ENCODE measurements at regions of chrX and their contacts with region 1.

Region 1: DNA sequence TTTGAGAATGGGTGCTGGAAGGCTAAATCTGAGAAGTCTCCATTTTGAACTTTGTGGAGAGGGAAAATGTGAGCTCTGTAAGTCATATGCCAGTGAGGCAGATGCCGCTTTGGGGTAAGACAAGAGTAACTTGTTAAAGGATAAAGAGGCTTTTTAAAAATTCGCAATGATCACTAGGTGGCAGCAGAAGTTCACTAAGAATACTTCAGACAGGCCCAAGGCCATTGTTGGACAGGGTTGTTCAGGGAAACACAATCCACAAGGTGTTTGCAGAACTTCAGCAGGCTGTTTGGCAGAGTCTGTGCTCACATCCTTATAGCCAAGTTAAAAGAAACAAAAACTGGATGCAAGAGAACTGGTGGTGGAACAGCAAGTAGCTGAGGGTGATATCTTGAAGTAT is 13.7 kb upstream of the PIGA start:
- DNase-seq: peak; percentile 43 to 67 (median 55)
- H3K4me3 ChIP-seq: no peak overlapping the region
- H3K4me3 Mint-ChIP-seq: no peak overlapping the region
- H3K27ac ChIP-seq: no peak overlapping the region
- H3K27ac Mint-ChIP-seq: no peak overlapping the region
- H3K4me1 ChIP-seq: peaks cover 6 to 8% of the 10 kb centered on the region in 2 donors
- H3K4me1 Mint-ChIP-seq: peaks cover 13% of the 10 kb centered on the region
- H3K27me3 ChIP-seq: peaks cover 0 to 14% of the 10 kb centered on the region in 2 donors
- H3K27me3 Mint-ChIP-seq: peaks cover 0 to 22% (median 8%) of the 10 kb centered on the region in 3 donors
- CTCF ChIP-seq: peak; percentile 52

Region 2: DNA sequence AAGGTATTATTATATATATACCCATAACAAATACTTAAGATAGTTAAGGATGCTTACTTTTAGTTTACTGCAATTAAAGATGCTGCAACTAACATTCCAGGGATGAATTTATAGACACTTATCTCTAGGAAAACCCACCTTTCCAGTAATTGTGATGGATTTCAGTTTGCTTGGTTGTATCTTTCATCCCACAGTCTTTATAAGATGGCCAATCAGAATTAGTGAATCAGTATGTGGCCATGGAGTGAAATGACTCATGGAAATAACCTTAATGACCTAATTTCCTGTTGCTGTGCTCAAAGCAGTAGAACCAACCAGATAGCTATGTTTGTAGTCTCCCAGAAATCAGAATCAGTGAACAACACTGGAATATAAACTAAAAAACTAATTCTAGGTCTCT is 449.4 kb before region 1 on chrX:
- intact Hi-C with region 1: no loop called
- DNase-seq: peak; percentile 18 to 73 (median 45)
- H3K4me3 ChIP-seq: no peak overlapping the region
- H3K4me3 Mint-ChIP-seq: no peak overlapping the region
- H3K27ac ChIP-seq: no peak overlapping the region
- H3K27ac Mint-ChIP-seq: peak overlapping the region in 4 of 7 donors; percentile 18 to 63 (median 36)
- H3K4me1 ChIP-seq: peaks cover 0 to 3% of the 10 kb centered on the region in 2 donors
- H3K4me1 Mint-ChIP-seq: peaks cover 3% of the 10 kb centered on the region
- H3K27me3 ChIP-seq: no peaks in the 10 kb centered on the region
- H3K27me3 Mint-ChIP-seq: no peaks in the 10 kb centered on the region
- CTCF ChIP-seq: no peak

Region 3: DNA sequence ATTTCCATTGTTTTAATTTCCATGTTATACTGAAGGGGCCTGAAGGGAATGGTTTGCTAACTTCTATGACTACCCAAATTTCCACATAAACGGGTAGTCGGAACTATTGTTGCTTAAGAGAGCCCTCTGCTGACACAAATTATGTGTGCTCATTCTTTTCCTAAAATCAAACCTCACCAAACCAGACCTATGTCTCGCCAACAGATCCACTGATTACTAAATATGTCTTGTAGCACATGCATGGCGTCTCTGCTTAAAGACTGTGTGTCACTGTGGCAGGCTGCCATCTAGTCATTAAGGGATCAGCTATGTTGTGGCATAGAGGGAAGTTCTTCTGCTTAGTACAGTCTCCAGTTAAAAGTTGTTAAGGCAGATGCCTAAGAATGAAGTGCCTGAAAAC is 119.0 kb after region 1 on chrX:
- intact Hi-C with region 1: loop called in 1 of 2 experiments (anchors 10 kb)
- DNase-seq: peak; percentile 45 to 58 (median 50)
- H3K4me3 ChIP-seq: no peak overlapping the region
- H3K4me3 Mint-ChIP-seq: no peak overlapping the region
- H3K27ac ChIP-seq: no peak overlapping the region
- H3K27ac Mint-ChIP-seq: peak overlapping the region in 1 of 7 donors; percentile 37
- H3K4me1 ChIP-seq: no peaks in the 10 kb centered on the region
- H3K4me1 Mint-ChIP-seq: peaks cover 8% of the 10 kb centered on the region
- H3K27me3 ChIP-seq: peaks cover 0 to 40% of the 10 kb centered on the region in 2 donors
- H3K27me3 Mint-ChIP-seq: peaks cover 0 to 32% (median 0%) of the 10 kb centered on the region in 3 donors
- CTCF ChIP-seq: peak; percentile 27

Region 4: DNA sequence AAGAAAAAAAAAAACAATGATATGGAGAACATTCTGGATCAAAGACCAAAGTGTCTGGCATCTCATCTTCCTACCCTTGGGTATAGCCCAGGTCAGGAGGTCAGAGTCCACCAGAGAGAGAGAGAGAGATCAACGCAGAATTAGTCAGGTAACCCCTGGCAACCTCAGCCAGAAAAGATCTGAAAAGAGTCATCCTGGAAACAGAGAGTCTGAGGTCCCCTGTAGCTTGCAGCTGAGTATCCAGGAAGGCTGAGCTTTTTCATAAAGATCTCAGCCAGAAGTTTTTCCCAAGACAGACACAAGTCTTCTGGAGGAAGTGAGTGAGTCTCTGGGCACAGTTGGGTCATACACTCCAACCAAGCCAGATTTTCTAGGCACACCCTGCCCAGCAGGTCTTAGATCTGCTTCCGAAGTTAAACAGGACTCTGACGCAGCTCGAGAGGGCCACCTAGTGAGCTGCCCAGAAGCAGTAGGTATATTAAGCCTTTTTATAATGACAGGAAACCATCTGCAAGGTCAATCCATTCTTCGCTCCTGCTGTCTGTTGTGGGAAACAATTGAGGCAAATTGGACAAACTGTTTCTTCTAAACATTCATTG is 216.0 kb after region 1 on chrX:
- intact Hi-C with region 1: loop called in 1 of 2 experiments (anchors 5 kb)
- DNase-seq: peak; percentile 29 to 39 (median 30)
- H3K4me3 ChIP-seq: no peak overlapping the region
- H3K4me3 Mint-ChIP-seq: no peak overlapping the region
- H3K27ac ChIP-seq: no peak overlapping the region
- H3K27ac Mint-ChIP-seq: peak overlapping the region in 2 of 7 donors; percentile 56 to 74
- H3K4me1 ChIP-seq: no peaks in the 10 kb centered on the region
- H3K4me1 Mint-ChIP-seq: peaks cover 4% of the 10 kb centered on the region
- H3K27me3 ChIP-seq: peaks cover 0 to 72% of the 10 kb centered on the region in 2 donors
- H3K27me3 Mint-ChIP-seq: peaks cover 1 to 54% (median 2%) of the 10 kb centered on the region in 3 donors
- CTCF ChIP-seq: peak; percentile 46

Measured in CD14-positive monocyte (primary cell).